ENCODE measurements at regions of chr3 and their contacts with region 1.

Region 1: DNA sequence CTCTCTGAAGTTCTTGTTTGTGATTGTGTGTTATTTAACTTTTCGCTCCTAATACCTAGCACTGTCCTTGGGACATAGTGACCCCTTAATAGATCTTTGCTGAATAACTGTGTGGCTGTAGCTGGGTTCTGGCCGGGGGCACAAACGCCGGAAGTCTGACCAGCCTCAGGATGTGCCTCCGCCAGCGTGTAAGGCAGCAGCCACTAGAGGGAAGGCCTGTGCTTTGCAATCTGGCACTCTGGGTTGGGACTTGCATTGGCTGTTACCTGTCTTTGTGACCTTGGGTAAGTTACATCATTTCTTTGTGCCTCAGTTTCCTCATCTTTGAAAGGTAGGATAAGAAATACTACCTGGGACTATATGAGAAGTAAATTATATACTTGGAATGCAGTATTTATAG is 158.7 kb downstream of the GHSR start:
- DNase-seq: peak; percentile 83

Region 2: GRCh38 chr3:172129870-172130683 is 159.5 kb before region 1 on chr3:
- intact Hi-C with region 1: loop called (anchors 5 kb)
- DNase-seq: peak; percentile 95

Region 3: GRCh38 chr3:172201136-172201869 is 88.3 kb before region 1 on chr3:
- intact Hi-C with region 1: loop called (anchors 5 kb)
- DNase-seq: peak; percentile 90